Activated CD4-positive, alpha-beta memory T cell treated with anti-CD3 and anti-CD28 coated beads, Interleukin-2, amount 10 ng/mL, durations not matched to agents 7 days and 5 days (primary cell): ENCODE measurements at regions of chr22 and their contacts with region 1.

Region 1: GRCh38 chr22:36486619-36487384 is 5.4 kb upstream of the TXN2 start:
- DNase-seq: peak; percentile 66
- H3K4me3 Mint-ChIP-seq: no peak overlapping the region
- H3K27ac Mint-ChIP-seq: no peak overlapping the region
- H3K4me1 Mint-ChIP-seq: peaks cover 7% of the 10 kb centered on the region
- H3K27me3 Mint-ChIP-seq: no peaks in the 10 kb centered on the region

Region 2: GRCh38 chr22:36194971-36195370 is 291.8 kb before region 1 on chr22:
- CTCF ChIA-PET with region 1: interaction called, 14 read pairs
- POLR2A ChIA-PET with region 1: no interaction called
- DNase-seq: peak; percentile 56
- H3K4me3 Mint-ChIP-seq: no peak overlapping the region
- H3K27ac Mint-ChIP-seq: no peak overlapping the region
- H3K4me1 Mint-ChIP-seq: peaks cover 47% of the 10 kb centered on the region
- H3K27me3 Mint-ChIP-seq: peaks cover 1% of the 10 kb centered on the region

Region 3: DNA sequence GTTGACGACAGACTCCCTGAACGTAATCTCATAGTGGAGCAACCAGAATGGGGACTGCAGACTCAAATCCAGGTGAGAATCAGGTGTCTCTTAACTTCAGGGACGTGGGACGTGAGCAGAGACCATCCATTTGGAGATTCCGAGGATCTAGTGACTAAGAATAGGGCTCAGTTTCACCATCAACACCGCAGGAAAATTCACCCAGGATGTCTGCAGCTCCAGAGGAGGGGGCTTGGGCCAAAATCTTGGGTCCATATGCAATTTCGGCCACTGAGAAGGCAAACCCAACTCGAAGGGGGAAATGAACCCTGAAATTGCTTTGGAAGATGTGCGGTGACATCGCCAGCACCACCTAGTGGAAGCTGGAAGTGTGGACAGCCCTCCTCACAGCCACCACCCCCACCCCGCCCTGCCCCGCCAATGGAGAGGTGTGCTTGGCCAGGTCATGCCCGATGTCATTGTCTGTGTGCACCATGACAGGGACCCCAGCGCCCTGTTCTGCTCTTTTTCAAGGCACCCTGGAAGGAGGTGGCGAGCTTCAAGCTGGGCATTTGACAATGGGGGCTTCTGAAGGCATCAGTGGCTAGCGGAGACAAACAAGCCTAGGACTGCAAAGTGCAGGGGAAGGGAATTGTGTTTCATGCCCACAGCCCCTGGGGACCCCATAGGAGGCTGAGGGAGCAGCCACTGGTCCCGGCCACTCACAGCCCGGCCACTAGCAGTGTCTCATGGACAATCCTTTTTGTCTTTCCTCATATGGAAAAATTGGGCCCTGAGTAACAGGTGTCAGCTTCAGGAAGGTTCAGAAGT is 209.1 kb before region 1 on chr22:
- CTCF ChIA-PET with region 1: interaction called, 10 read pairs
- POLR2A ChIA-PET with region 1: interaction called, 4 read pairs
- DNase-seq: peak; percentile 74
- H3K4me3 Mint-ChIP-seq: no peak overlapping the region
- H3K27ac Mint-ChIP-seq: peak overlapping the region; percentile 57
- H3K4me1 Mint-ChIP-seq: peaks cover 30% of the 10 kb centered on the region
- H3K27me3 Mint-ChIP-seq: no peaks in the 10 kb centered on the region

Region 4: DNA sequence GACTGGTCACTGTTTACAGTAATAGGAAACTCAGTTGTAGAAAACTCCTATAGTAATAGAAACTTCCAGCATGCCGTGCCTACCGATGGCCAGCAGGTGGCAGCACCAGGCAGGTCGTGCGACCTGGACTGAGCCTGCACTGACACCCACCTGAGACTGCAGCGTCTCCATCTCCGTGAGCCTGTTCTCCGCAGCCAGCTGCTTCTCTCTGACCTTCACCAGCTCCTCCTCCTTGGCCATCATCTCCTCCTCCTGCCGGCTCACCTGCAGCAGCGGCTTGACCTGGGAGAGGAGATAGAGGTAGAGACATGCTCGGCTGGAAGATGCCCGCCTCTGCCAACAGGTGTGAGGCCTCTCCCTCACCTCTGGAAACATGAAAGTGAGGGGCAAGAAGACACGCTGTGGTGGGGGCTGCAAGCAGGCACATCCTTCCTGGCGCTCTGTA is 185.4 kb before region 1 on chr22:
- CTCF ChIA-PET with region 1: interaction called, 18 read pairs
- POLR2A ChIA-PET with region 1: interaction called, 3 read pairs
- DNase-seq: peak; percentile 84
- H3K4me3 Mint-ChIP-seq: no peak overlapping the region
- H3K27ac Mint-ChIP-seq: peak overlapping the region; percentile 54
- H3K4me1 Mint-ChIP-seq: peaks cover 16% of the 10 kb centered on the region
- H3K27me3 Mint-ChIP-seq: no peaks in the 10 kb centered on the region